CD8-positive, alpha-beta memory T cell (primary cell): ENCODE measurements at regions of chr1 and their contacts with region 1.

Region 1: DNA sequence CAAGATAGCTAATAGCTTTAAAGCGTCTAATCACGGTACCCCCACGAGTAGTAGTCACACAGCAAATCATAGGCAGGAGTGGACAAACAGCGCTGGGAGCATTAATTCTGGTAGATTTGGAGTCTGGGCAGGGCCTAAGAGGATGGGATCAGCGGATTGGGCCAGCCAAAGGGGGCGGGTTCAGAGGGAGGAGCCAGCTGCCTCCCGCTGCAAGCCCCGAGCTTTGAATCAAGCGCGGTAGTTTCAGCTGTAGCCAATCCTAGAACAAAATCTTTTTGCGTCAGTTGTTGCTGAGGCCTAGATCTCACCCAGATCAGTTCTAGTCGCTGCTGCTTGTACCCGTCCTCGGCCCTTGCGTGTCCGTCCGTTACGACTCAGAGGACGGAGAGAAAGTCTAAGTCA is 576 bp upstream of the NASP start:
- DNase-seq: peak; percentile 93 to 96 (median 94)
- H3K4me3 ChIP-seq: peak overlapping the region; percentile 95
- H3K4me3 Mint-ChIP-seq: peak overlapping the region; percentile 93 to 100 (median 99)
- H3K27ac ChIP-seq: peak overlapping the region; percentile 95
- H3K27ac Mint-ChIP-seq: peak overlapping the region; percentile 96 to 99 (median 99)
- H3K4me1 ChIP-seq: peaks cover 21% of the 10 kb centered on the region
- H3K4me1 Mint-ChIP-seq: peaks cover 31 to 34% (median 34%) of the 10 kb centered on the region in 3 donors
- H3K27me3 ChIP-seq: no peaks in the 10 kb centered on the region
- H3K27me3 Mint-ChIP-seq: peaks cover 0 to 2% of the 10 kb centered on the region in 2 donors

Region 2: DNA sequence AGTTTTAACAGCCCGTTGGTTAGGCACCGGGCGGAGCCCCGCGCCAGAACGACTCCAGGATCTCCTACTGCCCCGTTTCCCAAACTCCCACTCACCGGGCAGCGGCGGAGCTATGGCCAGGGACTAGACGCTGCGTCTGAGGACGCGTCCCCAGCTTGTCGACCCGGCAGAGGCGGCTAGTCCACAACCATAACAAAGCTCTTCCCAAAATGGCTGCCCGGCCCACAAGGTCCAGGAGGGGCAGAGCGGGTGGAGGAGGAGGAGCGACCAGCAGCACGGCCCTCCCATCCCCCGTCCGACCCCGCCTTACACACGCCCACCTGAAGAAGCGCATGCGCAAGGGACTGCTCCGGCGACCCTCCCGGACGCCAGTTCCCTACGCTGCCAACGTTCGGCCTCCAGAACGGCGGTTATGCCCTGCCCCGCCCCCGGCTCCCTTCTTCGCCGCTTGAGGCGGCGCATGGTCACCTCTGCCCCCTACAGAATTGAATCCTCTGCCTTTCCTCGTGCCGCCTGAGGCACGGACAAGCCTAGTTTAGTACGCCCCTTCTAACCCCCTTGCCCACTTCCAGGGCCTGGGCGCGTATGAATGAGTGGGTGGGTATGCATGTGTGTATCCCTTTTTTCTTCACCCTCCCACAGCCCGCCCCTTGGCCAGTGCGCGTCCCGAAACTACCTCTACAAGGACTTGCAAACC is 103.2 kb after region 1 on chr1 and contains the start of gene GPBP1L1:
- CTCF ChIA-PET with region 1: no interaction called
- POLR2A ChIA-PET with region 1: interaction called, 11 read pairs
- DNase-seq: peak; percentile 95 to 98 (median 97)
- H3K4me3 ChIP-seq: peak within 1 kb of the TSS; percentile 85
- H3K4me3 Mint-ChIP-seq: peak within 1 kb of the TSS; percentile 98 to 100 (median 100)
- H3K27ac ChIP-seq: peak within 1 kb of the TSS; percentile 94
- H3K27ac Mint-ChIP-seq: peak within 1 kb of the TSS; percentile 98 to 100 (median 99)
- H3K4me1 ChIP-seq: peaks cover 55% of the 10 kb centered on the region
- H3K4me1 Mint-ChIP-seq: peaks cover 48 to 74% (median 62%) of the 10 kb centered on the region in 3 donors
- H3K27me3 ChIP-seq: no peaks in the 10 kb centered on the region
- H3K27me3 Mint-ChIP-seq: peaks cover 0 to 7% of the 10 kb centered on the region in 2 donors
- total RNA-seq, gene GPBP1L1: 102 to 107 TPM

Region 3: GRCh38 chr1:45876000-45876617 is 292.8 kb after region 1 on chr1:
- CTCF ChIA-PET with region 1: no interaction called
- POLR2A ChIA-PET with region 1: no interaction called
- DNase-seq: no peak
- H3K4me3 ChIP-seq: no peak overlapping the region
- H3K4me3 Mint-ChIP-seq: no peak overlapping the region
- H3K27ac ChIP-seq: no peak overlapping the region
- H3K27ac Mint-ChIP-seq: no peak overlapping the region
- H3K4me1 ChIP-seq: no peaks in the 10 kb centered on the region
- H3K4me1 Mint-ChIP-seq: no peaks in the 10 kb centered on the region
- H3K27me3 ChIP-seq: no peaks in the 10 kb centered on the region
- H3K27me3 Mint-ChIP-seq: no peaks in the 10 kb centered on the region